Astrocyte of the cerebellum (primary cell): ENCODE measurements at regions of chr11 and their contacts with region 1.

Region 1: DNA sequence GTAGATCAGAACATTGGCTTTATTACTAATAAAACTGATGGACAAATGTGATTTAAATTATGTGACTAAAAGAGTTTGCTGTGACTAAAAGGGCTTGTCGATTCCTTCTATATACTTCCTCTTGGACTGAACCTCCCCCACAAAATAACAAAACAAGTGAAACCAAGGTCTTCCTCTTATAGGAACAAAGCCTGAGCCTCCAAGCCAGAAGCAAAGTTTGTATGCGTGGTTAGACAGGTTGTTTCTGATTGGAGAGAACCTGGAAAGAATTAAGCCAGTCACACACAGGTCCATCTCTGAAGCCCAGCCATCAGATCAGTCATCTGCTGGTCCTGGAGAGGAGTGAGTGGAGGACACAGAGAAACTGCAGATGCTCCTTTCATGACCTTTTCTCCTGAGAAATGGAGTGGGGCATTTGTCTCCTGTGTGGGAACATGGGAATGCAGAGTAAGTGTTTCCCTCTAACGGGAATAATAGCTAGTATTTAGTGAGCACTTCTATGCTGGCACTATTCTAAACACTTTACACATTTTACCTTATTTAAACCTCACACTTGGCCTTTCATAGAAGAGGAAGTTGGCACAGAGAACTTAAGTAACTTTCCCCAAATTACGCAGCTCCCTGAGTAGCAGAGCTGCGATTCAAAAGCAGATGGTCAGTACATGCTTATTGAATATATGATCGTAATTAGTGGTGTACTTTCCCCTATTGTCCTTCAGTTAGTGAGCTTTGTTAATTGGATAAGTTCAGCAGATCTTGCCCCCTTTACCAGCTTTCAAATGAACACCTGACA is 77.1 kb downstream of the UVRAG start:
- DNase-seq: no peak
- H3K4me3 ChIP-seq: no peak overlapping the region
- CTCF ChIP-seq: no peak

Region 2: DNA sequence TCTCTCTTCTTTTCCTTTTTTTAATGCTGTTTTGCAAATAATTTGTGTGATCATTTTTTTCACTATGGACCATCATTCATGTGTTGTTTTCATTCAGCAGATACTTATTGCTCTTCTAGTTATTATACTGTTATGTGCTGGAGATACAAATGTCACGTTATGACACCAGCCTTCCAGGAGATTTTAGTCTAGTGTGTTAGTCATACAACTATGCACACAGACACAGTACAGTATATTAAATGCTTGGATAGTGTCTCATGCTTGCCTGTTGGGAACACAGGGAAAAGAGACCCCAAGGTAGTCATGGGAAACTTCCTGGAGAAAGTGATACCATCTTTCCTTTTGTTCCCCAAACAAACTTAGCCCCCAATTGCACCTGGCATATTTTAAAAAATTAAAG is 39.0 kb after region 1 on chr11:
- in situ Hi-C with region 1: no loop called
- DNase-seq: no peak
- H3K4me3 ChIP-seq: no peak overlapping the region
- CTCF ChIP-seq: no peak

Region 3: GRCh38 chr11:76329084-76329984 is 437.2 kb after region 1 on chr11:
- in situ Hi-C with region 1: loop called (anchors 5 kb)
- DNase-seq: peak; percentile 28
- H3K4me3 ChIP-seq: no peak overlapping the region
- CTCF ChIP-seq: no peak